Caco-2 (cell line): ENCODE measurements at regions of chr14 and their contacts with region 1.

Region 1: GRCh38 chr14:55354500-55354899 is 57.1 kb downstream of the ATG14 start:
- DNase-seq: peak; percentile 66 to 76
- H3K4me3 ChIP-seq: no peak overlapping the region
- H3K4me3 Mint-ChIP-seq: no peak overlapping the region
- H3K27ac Mint-ChIP-seq: peak overlapping the region; percentile 27
- H3K4me1 ChIP-seq: no peaks in the 10 kb centered on the region
- H3K4me1 Mint-ChIP-seq: peaks cover 9% of the 10 kb centered on the region
- H3K27me3 ChIP-seq: no peaks in the 10 kb centered on the region
- H3K27me3 Mint-ChIP-seq: no peaks in the 10 kb centered on the region
- CTCF ChIP-seq: peak; percentile 73 to 79

Region 2: DNA sequence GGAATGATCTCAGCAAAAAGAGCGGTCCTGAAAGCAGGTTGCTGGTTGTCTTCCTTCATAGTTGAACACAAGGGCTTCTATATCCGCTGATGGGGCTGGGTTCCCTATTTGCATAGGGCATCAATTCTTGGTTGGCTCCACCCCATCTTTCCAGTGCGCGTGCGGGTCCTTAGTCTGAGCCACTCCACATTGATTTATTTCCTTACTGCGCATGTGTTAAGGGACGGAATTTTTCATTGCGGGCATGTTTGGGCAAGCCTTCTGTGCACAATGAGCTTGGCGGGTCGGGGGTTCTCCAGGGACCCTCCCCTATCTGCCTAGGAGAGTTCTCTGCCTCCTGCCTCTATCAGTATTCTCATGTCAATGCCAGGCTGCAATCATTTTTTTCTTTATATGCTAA is 141.9 kb before region 1 on chr14:
- CTCF ChIA-PET with region 1: interaction called, 12 read pairs
- POLR2A ChIA-PET with region 1: no interaction called
- intact Hi-C with region 1: loop called (anchors 1 kb)
- DNase-seq: no peak
- H3K4me3 ChIP-seq: no peak overlapping the region
- H3K4me3 Mint-ChIP-seq: no peak overlapping the region
- H3K27ac Mint-ChIP-seq: no peak overlapping the region
- H3K4me1 ChIP-seq: no peaks in the 10 kb centered on the region
- H3K4me1 Mint-ChIP-seq: peaks cover 13% of the 10 kb centered on the region
- H3K27me3 ChIP-seq: no peaks in the 10 kb centered on the region
- H3K27me3 Mint-ChIP-seq: no peaks in the 10 kb centered on the region
- CTCF ChIP-seq: no peak

Region 3: DNA sequence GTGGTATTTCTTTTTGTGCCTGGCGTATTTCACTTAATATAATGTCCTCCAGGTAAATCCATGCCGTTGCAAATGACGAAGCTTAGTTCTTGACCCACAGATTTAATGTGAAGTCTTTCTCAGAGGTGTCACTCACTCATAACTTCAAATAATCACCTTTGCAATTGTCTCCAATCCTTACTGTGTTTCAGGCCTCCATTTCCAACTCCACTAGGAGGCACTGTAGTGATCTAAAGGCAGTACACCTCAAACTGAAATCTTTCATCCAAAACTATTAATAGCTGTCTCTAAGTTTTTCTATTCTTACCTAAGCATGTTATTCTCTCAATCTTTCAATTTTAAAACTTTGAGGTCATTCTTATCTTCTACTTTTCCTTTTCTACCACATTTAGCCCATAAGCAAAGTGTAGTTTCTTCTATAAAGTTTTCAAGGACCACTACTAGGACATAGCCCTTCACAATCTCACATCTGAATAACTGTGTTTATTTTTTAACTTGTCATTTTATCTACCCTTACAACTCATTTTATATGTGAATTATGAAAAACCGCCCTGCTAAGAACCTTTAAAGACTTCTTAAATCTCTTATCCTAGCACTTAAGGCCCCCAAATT is 108.7 kb before region 1 on chr14:
- CTCF ChIA-PET with region 1: interaction called, 10 read pairs
- POLR2A ChIA-PET with region 1: no interaction called
- intact Hi-C with region 1: loop called (anchors 1 kb)
- DNase-seq: peak in 1 of 2 experiments; percentile 32
- H3K4me3 ChIP-seq: no peak overlapping the region
- H3K4me3 Mint-ChIP-seq: no peak overlapping the region
- H3K27ac Mint-ChIP-seq: no peak overlapping the region
- H3K4me1 ChIP-seq: no peaks in the 10 kb centered on the region
- H3K4me1 Mint-ChIP-seq: no peaks in the 10 kb centered on the region
- H3K27me3 ChIP-seq: no peaks in the 10 kb centered on the region
- H3K27me3 Mint-ChIP-seq: peaks cover 8% of the 10 kb centered on the region
- CTCF ChIP-seq: peak; percentile 32 to 65

Region 4: GRCh38 chr14:55270832-55271565 is 83.5 kb before region 1 on chr14 and contains the start of gene FBXO34:
- CTCF ChIA-PET with region 1: interaction called, 24 read pairs
- POLR2A ChIA-PET with region 1: no interaction called
- intact Hi-C with region 1: loop called (anchors 1 kb)
- DNase-seq: peak; percentile 97 to 99
- H3K4me3 ChIP-seq: peak within 1 kb of the TSS; percentile 100
- H3K4me3 Mint-ChIP-seq: peak within 1 kb of the TSS; percentile 84
- H3K27ac Mint-ChIP-seq: peak within 1 kb of the TSS; percentile 94
- H3K4me1 ChIP-seq: peaks cover 45% of the 10 kb centered on the region
- H3K4me1 Mint-ChIP-seq: peaks cover 32% of the 10 kb centered on the region
- H3K27me3 ChIP-seq: no peaks in the 10 kb centered on the region
- H3K27me3 Mint-ChIP-seq: no peaks in the 10 kb centered on the region
- CTCF ChIP-seq: peak; percentile 98
- total RNA-seq, gene FBXO34: 23.7 and 27.3 TPM in 2 replicates

Region 5: GRCh38 chr14:55316567-55316966 is 37.9 kb before region 1 on chr14:
- CTCF ChIA-PET with region 1: interaction called, 13 read pairs
- POLR2A ChIA-PET with region 1: no interaction called
- intact Hi-C with region 1: loop called (anchors 2 kb)
- DNase-seq: peak; percentile 76 to 85
- H3K4me3 ChIP-seq: no peak overlapping the region
- H3K4me3 Mint-ChIP-seq: peak overlapping the region; percentile 46
- H3K27ac Mint-ChIP-seq: peak overlapping the region; percentile 72
- H3K4me1 ChIP-seq: peaks cover 40% of the 10 kb centered on the region
- H3K4me1 Mint-ChIP-seq: peaks cover 13% of the 10 kb centered on the region
- H3K27me3 ChIP-seq: no peaks in the 10 kb centered on the region
- H3K27me3 Mint-ChIP-seq: no peaks in the 10 kb centered on the region
- CTCF ChIP-seq: no peak